Activated T-helper 2 cell treated with anti-CD3 and anti-CD28 coated beads, Interferon-gamma antibody, Interleukin-2, Interleukin-4, amounts not matched to agents 10 μg/mL and 5 μg/mL and 100 μg/mL, durations not matched to agents 14 hours and 24 hours and 36 hours (primary cell): ENCODE measurements at regions of chr5 and their contacts with region 1.

Region 1: DNA sequence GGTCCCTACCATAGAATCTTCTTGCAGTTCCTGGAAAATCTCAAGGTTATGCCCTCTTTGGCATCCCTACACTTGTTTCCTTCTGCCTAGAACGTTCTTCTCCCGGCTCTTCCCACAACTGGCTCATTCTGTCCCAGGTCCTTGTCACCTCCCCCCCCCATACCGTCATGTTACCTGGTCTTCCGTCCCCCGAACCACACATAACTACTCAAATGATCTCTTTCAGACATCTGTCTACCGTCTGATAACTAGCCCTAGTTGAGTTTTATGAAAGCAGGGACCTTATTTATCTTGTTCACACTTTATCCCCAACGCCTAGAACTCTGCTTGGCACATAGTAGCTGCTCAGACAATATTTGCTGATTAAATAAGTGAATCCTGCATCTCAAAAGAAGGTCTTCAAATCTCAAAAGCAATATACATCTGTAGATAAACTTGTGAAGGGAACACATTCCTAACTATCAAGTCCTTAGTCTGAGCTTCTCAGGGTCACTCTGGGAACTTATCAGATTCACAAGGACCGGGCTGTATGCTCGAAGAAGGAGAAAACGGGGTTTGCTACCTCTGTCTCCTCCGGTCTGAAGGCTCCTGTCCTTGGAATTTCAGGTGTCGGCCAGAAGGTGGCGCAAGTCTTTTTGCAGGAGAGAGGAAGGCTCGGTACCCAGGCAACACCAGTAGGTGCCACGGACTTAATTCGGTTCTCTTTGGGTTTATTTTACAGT is 30.0 kb downstream of the LCP2 start:
- DNase-seq: peak; percentile 69
- H3K4me3 Mint-ChIP-seq: peak overlapping the region; percentile 68
- H3K27ac Mint-ChIP-seq: peak overlapping the region; percentile 88
- H3K4me1 Mint-ChIP-seq: peaks cover 79% of the 10 kb centered on the region
- H3K27me3 Mint-ChIP-seq: no peaks in the 10 kb centered on the region

Region 2: GRCh38 chr5:170225326-170226128 is 42.1 kb before region 1 on chr5:
- intact Hi-C with region 1: loop called (anchors 2 kb)
- DNase-seq: peak; percentile 54
- H3K4me3 Mint-ChIP-seq: no peak overlapping the region
- H3K27ac Mint-ChIP-seq: no peak overlapping the region
- H3K4me1 Mint-ChIP-seq: peaks cover 3% of the 10 kb centered on the region
- H3K27me3 Mint-ChIP-seq: no peaks in the 10 kb centered on the region

Region 3: GRCh38 chr5:170253844-170254455 is 13.6 kb before region 1 on chr5:
- intact Hi-C with region 1: loop called (anchors 2 kb)
- DNase-seq: peak; percentile 58
- H3K4me3 Mint-ChIP-seq: no peak overlapping the region
- H3K27ac Mint-ChIP-seq: peak overlapping the region; percentile 69
- H3K4me1 Mint-ChIP-seq: peaks cover 37% of the 10 kb centered on the region
- H3K27me3 Mint-ChIP-seq: no peaks in the 10 kb centered on the region

Region 4: GRCh38 chr5:170278611-170279452 is 11.2 kb after region 1 on chr5:
- intact Hi-C with region 1: loop called (anchors 1 kb)
- DNase-seq: peak; percentile 90
- H3K4me3 Mint-ChIP-seq: peak overlapping the region; percentile 63
- H3K27ac Mint-ChIP-seq: peak overlapping the region; percentile 98
- H3K4me1 Mint-ChIP-seq: peaks cover 86% of the 10 kb centered on the region
- H3K27me3 Mint-ChIP-seq: no peaks in the 10 kb centered on the region

Region 5: DNA sequence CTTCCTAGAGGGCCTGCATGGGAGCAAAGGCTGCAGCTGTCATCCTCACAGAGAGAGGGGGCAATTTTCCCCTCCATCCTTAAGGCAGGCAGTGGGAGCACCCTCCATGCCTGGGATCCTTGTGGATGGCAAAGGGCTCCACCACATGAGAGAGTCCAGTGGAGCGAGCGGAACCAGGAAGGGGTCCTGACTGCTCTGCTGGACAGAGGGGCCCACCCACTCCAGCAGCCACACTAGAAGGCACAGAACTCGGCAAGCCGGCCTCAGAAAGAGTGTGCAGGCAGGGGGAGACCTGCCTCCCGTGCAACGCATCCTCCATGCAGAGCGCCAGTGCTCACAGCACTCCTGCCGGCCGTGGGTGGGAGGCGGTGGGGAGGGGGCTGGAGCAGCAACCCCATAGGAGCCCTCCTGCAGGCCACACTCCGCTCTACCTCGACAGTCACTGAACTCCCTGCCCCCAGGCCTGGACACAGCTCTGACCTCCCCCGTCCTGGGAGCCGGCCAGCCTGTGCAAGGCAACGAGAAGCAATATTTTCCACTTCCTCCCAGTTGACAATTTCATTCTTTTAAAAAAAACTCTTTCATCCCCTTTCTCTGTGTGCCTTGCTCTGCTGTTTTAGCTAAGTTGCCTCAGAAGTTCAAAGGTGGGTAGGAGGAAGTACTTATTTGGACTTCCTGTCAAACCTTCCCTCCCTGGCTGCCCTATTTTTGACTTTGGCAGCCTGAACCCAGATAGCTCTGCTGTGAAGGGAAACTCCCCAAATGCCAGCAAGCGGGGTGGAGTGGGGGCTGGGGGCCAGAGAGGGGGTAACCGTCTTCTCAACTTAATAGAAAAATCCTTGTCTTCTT is 35.3 kb after region 1 on chr5:
- intact Hi-C with region 1: loop called (anchors 5 kb)
- DNase-seq: peak; percentile 60
- H3K4me3 Mint-ChIP-seq: peak overlapping the region; percentile 45
- H3K27ac Mint-ChIP-seq: peak overlapping the region; percentile 87
- H3K4me1 Mint-ChIP-seq: peaks cover 70% of the 10 kb centered on the region
- H3K27me3 Mint-ChIP-seq: no peaks in the 10 kb centered on the region

Region 6: DNA sequence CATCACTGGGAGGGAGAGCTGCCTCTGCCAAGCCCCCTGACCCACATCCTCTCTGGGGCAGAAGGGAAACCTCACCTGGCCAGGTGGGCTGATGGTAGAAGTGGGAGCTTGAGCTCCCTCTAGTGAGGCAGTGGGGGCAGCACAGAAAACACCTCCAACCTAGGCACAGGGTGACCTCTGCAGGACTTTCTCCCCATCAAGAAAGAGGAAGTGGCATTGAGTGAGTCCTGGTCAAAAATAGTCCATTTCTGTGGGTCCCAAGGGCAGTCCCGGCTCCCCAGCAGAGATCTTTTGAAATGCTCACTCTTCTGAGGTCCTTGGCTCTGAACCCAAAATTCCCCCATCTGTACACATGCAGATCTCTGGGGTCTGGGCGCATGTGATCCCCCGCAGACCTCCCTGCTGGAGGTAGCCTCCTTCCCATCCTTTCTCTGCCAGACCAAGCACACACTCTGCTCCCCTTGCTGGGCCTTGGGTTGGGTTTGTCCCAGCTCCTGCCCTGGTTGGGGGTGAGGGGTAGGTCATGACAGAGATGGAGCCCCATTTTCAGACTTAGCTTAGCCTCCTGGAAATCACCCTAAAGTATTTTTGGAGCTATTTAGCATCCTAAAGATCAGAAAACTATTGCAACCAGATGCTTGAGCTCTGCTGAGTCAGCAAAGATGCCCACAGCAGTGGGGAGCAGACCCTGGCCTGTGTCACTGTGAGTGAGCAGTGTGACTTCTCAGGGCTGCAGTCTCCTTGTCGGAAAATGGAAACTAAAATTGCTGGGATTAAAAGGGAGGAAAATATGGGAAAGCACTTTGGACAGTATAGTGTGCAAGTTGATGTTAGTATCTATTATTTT is 71.6 kb after region 1 on chr5:
- intact Hi-C with region 1: loop called (anchors 1 kb)
- DNase-seq: peak; percentile 49
- H3K4me3 Mint-ChIP-seq: no peak overlapping the region
- H3K27ac Mint-ChIP-seq: no peak overlapping the region
- H3K4me1 Mint-ChIP-seq: peaks cover 46% of the 10 kb centered on the region
- H3K27me3 Mint-ChIP-seq: peaks cover 10% of the 10 kb centered on the region

Region 7: DNA sequence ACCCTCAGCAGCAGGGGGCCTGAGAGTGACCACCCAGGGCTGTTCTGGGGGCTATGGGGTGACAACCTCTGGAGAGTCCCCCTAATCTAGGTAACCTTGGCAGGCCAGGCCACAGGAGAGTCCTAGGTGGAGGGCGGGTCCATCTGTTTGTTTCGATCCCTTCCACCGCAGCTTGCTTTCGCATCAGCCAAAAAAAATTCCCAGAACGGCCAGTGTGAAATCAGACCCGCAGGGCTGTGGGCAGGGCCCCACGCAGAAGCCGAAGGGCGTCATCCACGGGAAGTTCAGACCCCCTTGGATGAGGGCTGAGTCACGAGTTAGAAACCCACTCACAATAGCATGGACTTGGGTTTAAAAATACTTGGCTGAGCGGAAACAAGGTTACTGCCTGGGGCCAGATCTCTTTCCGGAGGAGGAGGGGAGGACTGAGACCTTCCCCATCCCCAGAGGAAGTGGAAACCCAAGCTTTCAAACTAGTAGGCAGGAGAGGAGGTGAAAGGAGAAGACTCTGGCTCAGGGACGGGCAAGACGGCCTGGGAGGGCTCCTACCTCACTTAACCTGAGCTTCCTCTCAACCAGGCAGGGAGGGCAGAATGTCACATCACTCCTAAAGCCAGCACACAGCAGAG is 1911.9 kb after region 1 on chr5:
- intact Hi-C with region 1: loop called (anchors 5 kb)
- DNase-seq: peak; percentile 44
- H3K4me3 Mint-ChIP-seq: peak overlapping the region; percentile 76
- H3K27ac Mint-ChIP-seq: peak overlapping the region; percentile 92
- H3K4me1 Mint-ChIP-seq: peaks cover 73% of the 10 kb centered on the region
- H3K27me3 Mint-ChIP-seq: no peaks in the 10 kb centered on the region